Mammary epithelial cell (primary cell): ENCODE measurements at regions of chr1 and their contacts with region 1.

Region 1: DNA sequence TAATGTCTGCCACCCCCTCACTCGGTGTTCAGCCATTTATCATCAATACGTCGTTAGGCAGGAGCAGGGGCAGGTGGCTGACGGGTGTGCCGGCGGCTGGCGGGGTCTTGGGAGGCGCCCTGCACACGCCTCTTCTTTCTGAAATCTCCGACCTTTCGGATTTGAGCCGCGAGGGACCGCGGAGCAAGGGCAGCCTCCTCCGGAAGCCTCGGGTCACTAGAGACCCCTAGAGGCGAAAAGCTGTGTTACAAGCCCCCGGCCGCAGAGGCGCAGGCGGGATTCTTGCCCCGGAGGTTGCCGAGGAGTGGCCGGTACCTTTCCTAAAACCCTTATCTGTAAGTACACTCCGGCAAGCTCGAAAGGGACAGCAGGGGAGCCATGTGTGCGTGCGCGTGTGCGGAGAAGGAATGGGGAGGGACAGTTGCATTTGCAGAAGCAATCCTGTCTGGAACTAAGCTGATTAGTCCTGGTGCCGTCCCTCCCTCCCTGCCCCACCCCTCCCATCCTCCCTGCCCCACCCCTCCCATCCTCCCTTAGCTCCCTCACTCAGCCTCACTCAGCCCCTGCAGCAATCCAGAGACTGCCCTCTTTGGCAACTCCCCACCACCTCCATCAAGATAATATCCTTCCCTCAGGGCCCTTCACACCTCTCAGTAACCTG is 11.0 kb downstream of the BRINP2 start:
- DNase-seq: peak; percentile 34
- H3K4me3 ChIP-seq: peak overlapping the region in 2 of 3 experiments; percentile 23 to 31
- H3K27ac ChIP-seq: no peak overlapping the region
- H3K4me1 ChIP-seq: peaks cover 5% of the 10 kb centered on the region
- H3K27me3 ChIP-seq: peaks cover 11% of the 10 kb centered on the region
- CTCF ChIP-seq: peak; percentile 64 to 89

Region 2: GRCh38 chr1:176949033-176949662 is 232.6 kb before region 1 on chr1:
- CTCF ChIA-PET with region 1: no interaction called
- dilution Hi-C with region 1: no loop called
- in situ Hi-C with region 1: no loop called
- intact Hi-C with region 1: loop called (anchors 1 kb)
- DNase-seq: peak; percentile 68
- H3K4me3 ChIP-seq: no peak overlapping the region
- H3K27ac ChIP-seq: no peak overlapping the region
- H3K4me1 ChIP-seq: no peaks in the 10 kb centered on the region
- H3K27me3 ChIP-seq: no peaks in the 10 kb centered on the region
- CTCF ChIP-seq: peak; percentile 81 to 91

Region 3: GRCh38 chr1:176987016-176987415 is 194.7 kb before region 1 on chr1:
- CTCF ChIA-PET with region 1: no interaction called
- dilution Hi-C with region 1: no loop called
- in situ Hi-C with region 1: no loop called
- intact Hi-C with region 1: no loop called
- DNase-seq: peak; percentile 58
- H3K4me3 ChIP-seq: no peak overlapping the region
- H3K27ac ChIP-seq: no peak overlapping the region
- H3K4me1 ChIP-seq: peaks cover 16% of the 10 kb centered on the region
- H3K27me3 ChIP-seq: no peaks in the 10 kb centered on the region
- CTCF ChIP-seq: no peak

Region 4: DNA sequence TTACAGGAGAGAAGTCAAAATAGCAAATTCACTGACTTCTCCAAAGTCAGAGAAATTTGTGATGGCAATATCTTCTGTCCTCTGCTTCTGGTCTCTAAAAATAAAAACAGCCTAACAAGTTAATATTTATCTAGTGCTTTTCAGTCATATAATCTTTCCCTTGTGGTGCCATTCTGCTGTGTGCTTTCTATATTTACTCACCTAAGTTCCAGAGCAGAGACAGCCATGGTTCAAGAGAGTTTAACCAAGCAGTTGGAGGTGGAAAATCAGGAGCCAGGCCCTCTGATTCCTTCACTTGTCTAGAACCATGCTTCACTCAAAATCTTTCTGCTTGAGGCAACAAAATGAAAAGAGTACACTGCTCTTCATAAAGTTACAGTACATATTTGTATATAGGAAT is 28.3 kb after region 1 on chr1:
- CTCF ChIA-PET with region 1: interaction called, 11 read pairs
- dilution Hi-C with region 1: no loop called
- in situ Hi-C with region 1: no loop called
- intact Hi-C with region 1: no loop called
- DNase-seq: no peak
- H3K4me3 ChIP-seq: no peak overlapping the region
- H3K27ac ChIP-seq: peak overlapping the region; percentile 6
- H3K4me1 ChIP-seq: peaks cover 17% of the 10 kb centered on the region
- H3K27me3 ChIP-seq: no peaks in the 10 kb centered on the region
- CTCF ChIP-seq: no peak

Region 5: GRCh38 chr1:177355595-177355994 is 173.8 kb after region 1 on chr1:
- CTCF ChIA-PET with region 1: no interaction called
- dilution Hi-C with region 1: no loop called
- in situ Hi-C with region 1: no loop called
- intact Hi-C with region 1: loop called (anchors 5 kb)
- DNase-seq: peak; percentile 41
- H3K4me3 ChIP-seq: no peak overlapping the region
- H3K27ac ChIP-seq: no peak overlapping the region
- H3K4me1 ChIP-seq: no peaks in the 10 kb centered on the region
- H3K27me3 ChIP-seq: no peaks in the 10 kb centered on the region
- CTCF ChIP-seq: peak; percentile 51 to 59

Region 6: DNA sequence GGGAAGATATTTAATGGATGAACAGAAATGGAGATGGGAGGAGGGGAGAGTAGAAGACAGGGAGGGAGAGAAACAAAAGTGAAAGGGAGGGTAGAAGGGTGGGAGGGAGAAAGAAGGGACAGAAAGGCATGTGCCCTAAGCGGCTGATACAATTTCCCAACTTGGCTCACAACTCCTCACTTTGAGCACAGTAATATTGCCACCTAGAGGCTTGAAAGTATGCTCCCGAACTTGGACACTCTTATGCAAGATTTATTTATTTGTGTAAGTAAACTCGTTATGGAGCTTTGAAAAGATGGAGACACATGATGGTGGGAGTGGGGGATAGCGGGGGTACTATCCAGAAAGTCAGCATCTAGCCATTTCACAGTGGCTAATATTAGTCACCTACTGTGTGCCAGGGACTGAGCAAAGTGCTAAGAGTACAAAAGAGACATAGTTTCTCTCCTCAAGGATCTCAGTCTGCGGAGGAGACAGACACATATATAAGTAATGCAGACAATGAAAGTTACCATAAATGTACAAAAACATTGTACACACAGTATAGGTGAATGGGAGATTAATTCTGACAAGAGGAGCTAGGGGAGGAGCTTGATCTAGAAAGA is 598.4 kb after region 1 on chr1:
- CTCF ChIA-PET with region 1: no interaction called
- dilution Hi-C with region 1: no loop called
- in situ Hi-C with region 1: no loop called
- intact Hi-C with region 1: loop called (anchors 5 kb)
- DNase-seq: peak; percentile 51
- H3K4me3 ChIP-seq: no peak overlapping the region
- H3K27ac ChIP-seq: no peak overlapping the region
- H3K4me1 ChIP-seq: no peaks in the 10 kb centered on the region
- H3K27me3 ChIP-seq: no peaks in the 10 kb centered on the region
- CTCF ChIP-seq: peak; percentile 49 to 71